GM12878 (cell line): ENCODE measurements at regions of chr10 and their contacts with region 1.

Region 1: DNA sequence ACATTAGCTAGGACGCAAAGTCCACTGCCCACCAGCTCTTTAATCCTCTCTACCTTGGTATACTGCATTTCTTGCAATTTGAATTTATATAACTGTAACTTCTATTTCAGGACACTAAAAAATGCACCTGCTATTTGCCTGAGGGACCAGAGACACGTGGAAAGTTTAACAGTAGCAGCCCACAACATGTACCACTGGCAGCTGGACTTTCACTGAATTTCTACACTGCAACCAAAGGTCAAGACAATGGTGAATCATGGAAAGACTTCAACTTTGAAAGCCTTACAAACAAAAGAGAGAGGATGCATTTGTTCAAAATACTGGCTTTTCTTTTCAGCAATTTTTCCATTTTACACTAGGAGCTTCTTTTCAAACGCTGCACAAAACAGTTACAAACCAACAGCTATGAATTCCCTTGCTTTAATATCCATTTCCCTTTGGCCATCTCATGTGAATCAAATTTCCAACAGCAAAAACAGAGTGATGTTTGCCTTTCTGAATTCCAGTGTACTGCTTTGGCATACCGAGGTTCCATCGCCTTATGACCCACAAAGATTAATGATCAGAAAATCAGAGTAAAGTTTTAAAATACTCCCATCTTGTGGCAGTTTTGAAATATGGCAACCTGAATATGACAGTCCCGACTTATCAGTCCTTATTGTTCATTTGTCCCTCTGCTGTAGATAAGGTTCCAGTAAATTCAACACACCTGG is 29.9 kb upstream of the HNRNPH3 start:
- DNase-seq: peak; percentile 41
- ATAC-seq: peak; percentile 84
- H3K4me3 ChIP-seq: no peak overlapping the region
- H3K27ac ChIP-seq: no peak overlapping the region
- H3K4me1 ChIP-seq: peaks cover 16% of the 10 kb centered on the region
- H3K27me3 ChIP-seq: no peaks in the 10 kb centered on the region
- CTCF ChIP-seq: peak; percentile 52 to 64 (median 56); a peak in 5 of 6 replicates
- EP300 ChIP-seq: no peak
- POLR2A ChIP-seq: no peak
- RAD21 ChIP-seq: peak; percentile 70

Region 2: GRCh38 chr10:67849331-67850011 is 452.5 kb before region 1 on chr10:
- CTCF ChIA-PET with region 1: interaction called, 47 read pairs
- POLR2A ChIA-PET with region 1: no interaction called
- RAD21 ChIA-PET with region 1: interaction called, 31 read pairs
- SMC1A ChIA-PET with region 1: interaction called, 29 read pairs
- in situ Hi-C with region 1: loop called (anchors 5 kb)
- intact Hi-C with region 1: no loop called
- DNase-seq: peak; percentile 84
- ATAC-seq: peak; percentile 98
- H3K4me3 ChIP-seq: peak overlapping the region; percentile 82
- H3K27ac ChIP-seq: peak overlapping the region; percentile 98
- H3K4me1 ChIP-seq: no peaks in the 10 kb centered on the region
- H3K27me3 ChIP-seq: no peaks in the 10 kb centered on the region
- CTCF ChIP-seq: no peak
- EP300 ChIP-seq: no peak
- POLR2A ChIP-seq: peak; percentile 71
- RAD21 ChIP-seq: no peak

Region 3: DNA sequence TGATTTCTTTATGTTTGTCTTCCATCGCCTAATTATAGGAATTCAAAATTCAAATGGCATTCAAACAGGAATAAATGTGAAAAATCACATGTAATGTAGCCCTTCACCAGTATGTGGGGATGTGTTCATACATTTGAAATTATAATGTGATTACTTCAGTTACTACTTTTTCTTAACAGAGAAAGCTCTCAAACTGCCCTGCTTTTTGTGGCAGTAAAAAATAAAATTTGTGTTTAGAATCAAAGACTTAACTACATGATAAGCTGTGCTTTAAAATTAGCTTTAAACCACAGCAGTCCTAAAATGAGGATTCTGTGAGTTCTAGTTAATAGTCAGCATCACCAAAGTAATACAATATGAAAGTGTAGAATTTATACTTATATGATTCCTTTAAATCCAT is 219.1 kb before region 1 on chr10:
- CTCF ChIA-PET with region 1: interaction called, 13 read pairs
- POLR2A ChIA-PET with region 1: no interaction called
- RAD21 ChIA-PET with region 1: interaction called, 4 read pairs
- SMC1A ChIA-PET with region 1: interaction called, 6 read pairs
- in situ Hi-C with region 1: no loop called
- intact Hi-C with region 1: no loop called
- DNase-seq: no peak
- ATAC-seq: no peak
- H3K4me3 ChIP-seq: no peak overlapping the region
- H3K27ac ChIP-seq: no peak overlapping the region
- H3K4me1 ChIP-seq: no peaks in the 10 kb centered on the region
- H3K27me3 ChIP-seq: no peaks in the 10 kb centered on the region; a peak in 1 of 4 replicates
- CTCF ChIP-seq: peak in 1 of 3 experiments; percentile 6; a peak in 2 of 6 replicates
- EP300 ChIP-seq: no peak
- POLR2A ChIP-seq: no peak
- RAD21 ChIP-seq: peak; percentile 33; the same call in 1 of the 2 replicates

Region 4: GRCh38 chr10:68288717-68289116 is 13.2 kb before region 1 on chr10:
- CTCF ChIA-PET with region 1: interaction called, 16 read pairs
- POLR2A ChIA-PET with region 1: no interaction called
- RAD21 ChIA-PET with region 1: no interaction called
- SMC1A ChIA-PET with region 1: interaction called, 5 read pairs
- in situ Hi-C with region 1: no loop called
- intact Hi-C with region 1: no loop called
- DNase-seq: no peak
- ATAC-seq: no peak
- H3K4me3 ChIP-seq: no peak overlapping the region
- H3K27ac ChIP-seq: no peak overlapping the region
- H3K4me1 ChIP-seq: no peaks in the 10 kb centered on the region
- H3K27me3 ChIP-seq: no peaks in the 10 kb centered on the region
- CTCF ChIP-seq: no peak
- EP300 ChIP-seq: no peak
- POLR2A ChIP-seq: no peak
- RAD21 ChIP-seq: no peak

Region 5: GRCh38 chr10:68331455-68332258 is 29.7 kb after region 1 on chr10 and contains the start of gene HNRNPH3:
- CTCF ChIA-PET with region 1: interaction called, 23 read pairs
- POLR2A ChIA-PET with region 1: interaction called, 6 read pairs
- RAD21 ChIA-PET with region 1: interaction called, 8 read pairs
- SMC1A ChIA-PET with region 1: interaction called, 6 read pairs
- in situ Hi-C with region 1: no loop called
- intact Hi-C with region 1: no loop called
- DNase-seq: peak; percentile 93
- ATAC-seq: peak; percentile 80
- H3K4me3 ChIP-seq: peak within 1 kb of the TSS; percentile 99
- H3K27ac ChIP-seq: peak within 1 kb of the TSS; percentile 99
- H3K4me1 ChIP-seq: no peaks in the 10 kb centered on the region; the same call in 1 of the 2 replicates
- H3K27me3 ChIP-seq: no peaks in the 10 kb centered on the region
- CTCF ChIP-seq: no peak
- EP300 ChIP-seq: peak in 1 of 2 experiments; percentile 37; a peak in 1 of 4 replicates
- POLR2A ChIP-seq: peak; percentile 98
- RAD21 ChIP-seq: no peak
- polyA plus RNA-seq, gene HNRNPH3: 76.0 to 98.7 TPM

Region 6: DNA sequence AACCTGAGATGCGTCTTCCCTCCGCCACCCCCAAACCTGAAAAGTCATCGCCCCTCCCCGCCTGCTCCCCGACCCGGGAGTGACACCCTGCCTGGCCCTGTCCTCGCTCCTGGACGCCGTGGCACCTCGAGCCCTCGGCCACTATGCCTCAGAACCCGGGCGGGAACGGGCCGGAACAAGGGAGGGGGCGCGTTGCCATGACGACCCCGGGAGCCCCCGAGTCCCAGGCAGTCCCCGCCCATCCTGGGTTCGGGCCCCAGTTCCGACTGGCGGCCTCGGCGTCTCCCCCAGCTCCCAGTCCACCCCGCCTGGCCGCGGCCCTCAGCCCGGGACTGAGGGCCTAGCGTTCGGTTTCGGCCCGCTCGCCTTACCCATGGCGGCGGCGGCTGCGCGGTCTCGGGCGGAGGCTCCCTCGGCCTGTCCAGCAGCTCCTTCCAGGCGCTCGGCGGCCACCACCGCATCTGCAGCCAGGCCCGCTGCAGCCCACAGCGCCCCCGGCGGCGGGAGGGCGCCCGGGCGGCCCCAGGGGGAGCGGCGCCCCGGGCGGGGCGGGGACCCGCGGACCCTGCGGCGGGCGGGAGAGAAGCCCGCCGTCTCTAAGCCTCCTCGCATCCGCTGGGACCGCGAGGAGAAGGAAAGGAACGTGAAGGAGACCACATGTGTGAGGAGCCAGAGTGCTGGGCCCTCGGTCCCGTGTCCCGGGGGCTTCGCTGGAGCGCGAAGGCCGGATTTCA is 105.0 kb after region 1 on chr10 and contains the start of gene RUFY2:
- CTCF ChIA-PET with region 1: no interaction called
- POLR2A ChIA-PET with region 1: no interaction called
- RAD21 ChIA-PET with region 1: no interaction called
- SMC1A ChIA-PET with region 1: no interaction called
- in situ Hi-C with region 1: no loop called
- intact Hi-C with region 1: no loop called
- DNase-seq: peak; percentile 20
- ATAC-seq: peak; percentile 97
- H3K4me3 ChIP-seq: peak within 1 kb of the TSS; percentile 79
- H3K27ac ChIP-seq: peak within 1 kb of the TSS; percentile 85
- H3K4me1 ChIP-seq: no peaks in the 10 kb centered on the region
- H3K27me3 ChIP-seq: no peaks in the 10 kb centered on the region
- CTCF ChIP-seq: peak; percentile 56 to 67 (median 57); a peak in 5 of 6 replicates
- EP300 ChIP-seq: no peak
- POLR2A ChIP-seq: peak; percentile 87
- RAD21 ChIP-seq: 0 out of 2 replicates have a peak, but pooled peaks have one; percentile 15
- polyA plus RNA-seq, gene RUFY2: 1.7 to 2.3 TPM